WTC11 (cell line): ENCODE measurements at regions of chr1 and their contacts with region 1.

Region 1: GRCh38 chr1:151118021-151118420 is 28.4 kb downstream of the SEMA6C start:
- DNase-seq: no peak
- ATAC-seq: no peak
- H3K4me3 Mint-ChIP-seq: no peak overlapping the region
- H3K27ac Mint-ChIP-seq: no peak overlapping the region
- H3K4me1 Mint-ChIP-seq: no peaks in the 10 kb centered on the region
- H3K27me3 Mint-ChIP-seq: no peaks in the 10 kb centered on the region; the same call in 1 of the 2 replicates
- CTCF ChIP-seq: no peak

Region 2: GRCh38 chr1:150572918-150573647 is 544.9 kb before region 1 on chr1:
- CTCF ChIA-PET with region 1: no interaction called
- POLR2A ChIA-PET with region 1: interaction called, 11 read pairs
- DNase-seq: no peak
- ATAC-seq: no peak
- H3K4me3 Mint-ChIP-seq: peak overlapping the region; percentile 46
- H3K27ac Mint-ChIP-seq: peak overlapping the region; percentile 97
- H3K4me1 Mint-ChIP-seq: peaks cover 76% of the 10 kb centered on the region
- H3K27me3 Mint-ChIP-seq: no peaks in the 10 kb centered on the region
- CTCF ChIP-seq: no peak

Region 3: DNA sequence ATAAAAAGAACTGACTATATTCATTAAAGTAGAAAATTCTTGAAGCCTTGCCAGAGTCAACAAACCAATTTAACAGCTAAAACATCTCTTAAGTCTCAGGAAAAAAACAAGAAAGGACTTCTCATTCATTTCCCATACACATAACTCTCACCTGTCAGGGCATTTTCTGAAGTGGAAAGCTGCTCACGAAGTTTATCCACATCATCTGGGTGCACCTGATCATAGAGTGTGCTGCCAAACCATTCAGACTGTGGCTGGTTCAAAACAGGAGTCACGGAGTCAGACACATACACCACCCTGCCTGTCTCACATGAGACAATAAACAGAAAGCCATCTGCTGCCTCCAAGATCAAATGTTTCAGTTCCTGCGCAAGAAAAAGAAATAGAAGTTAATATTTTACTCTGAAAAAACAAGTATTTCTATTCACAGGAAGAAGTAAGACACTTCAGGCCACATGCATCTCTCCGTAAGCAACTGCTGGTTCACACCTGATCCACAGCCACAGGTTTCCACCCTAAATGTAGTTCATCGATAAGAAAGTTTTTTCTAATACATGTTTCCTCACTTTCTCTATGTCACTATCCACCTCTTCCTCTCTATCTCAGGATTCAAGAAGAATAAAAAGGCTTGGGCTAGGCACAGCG is 281.8 kb before region 1 on chr1:
- CTCF ChIA-PET with region 1: no interaction called
- POLR2A ChIA-PET with region 1: no interaction called
- DNase-seq: no peak
- ATAC-seq: no peak
- H3K4me3 Mint-ChIP-seq: no peak overlapping the region
- H3K27ac Mint-ChIP-seq: no peak overlapping the region
- H3K4me1 Mint-ChIP-seq: no peaks in the 10 kb centered on the region
- H3K27me3 Mint-ChIP-seq: no peaks in the 10 kb centered on the region
- CTCF ChIP-seq: no peak

Region 4: DNA sequence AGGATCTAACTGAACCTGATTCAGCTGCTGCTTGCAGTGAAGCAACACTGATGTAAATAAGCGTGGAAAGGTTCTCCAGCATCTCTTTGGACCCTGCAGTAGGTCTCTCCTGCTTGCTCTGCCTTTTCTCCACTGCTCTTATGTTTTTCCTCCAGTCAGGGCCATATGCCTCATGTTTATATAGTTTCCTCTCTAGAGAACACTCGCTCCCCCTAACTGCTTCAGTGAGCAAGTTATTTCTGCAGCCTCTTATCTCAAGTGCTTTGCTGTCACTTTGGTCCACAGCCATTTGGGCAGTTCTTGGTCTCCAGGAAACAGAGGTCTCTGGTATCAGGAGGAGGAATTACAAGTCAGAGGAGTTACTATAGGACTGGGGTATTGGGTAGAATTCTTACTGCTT is 104.5 kb before region 1 on chr1:
- CTCF ChIA-PET with region 1: no interaction called
- POLR2A ChIA-PET with region 1: no interaction called
- DNase-seq: no peak
- ATAC-seq: no peak
- H3K4me3 Mint-ChIP-seq: no peak overlapping the region
- H3K27ac Mint-ChIP-seq: no peak overlapping the region
- H3K4me1 Mint-ChIP-seq: peaks cover 7% of the 10 kb centered on the region
- H3K27me3 Mint-ChIP-seq: no peaks in the 10 kb centered on the region
- CTCF ChIP-seq: no peak

Region 5: GRCh38 chr1:151292207-151293030 is 174.4 kb after region 1 on chr1:
- CTCF ChIA-PET with region 1: no interaction called
- POLR2A ChIA-PET with region 1: no interaction called
- DNase-seq: no peak
- ATAC-seq: peak; percentile 43
- H3K4me3 Mint-ChIP-seq: no peak overlapping the region
- H3K27ac Mint-ChIP-seq: no peak overlapping the region; the same call in 1 of the 2 replicates
- H3K4me1 Mint-ChIP-seq: peaks cover 30% of the 10 kb centered on the region
- H3K27me3 Mint-ChIP-seq: no peaks in the 10 kb centered on the region
- CTCF ChIP-seq: no peak